Activated CD4-positive, alpha-beta memory T cell treated with anti-CD3 and anti-CD28 coated beads for 36 hours (primary cell): ENCODE measurements at regions of chr1 and their contacts with region 1.

Region 1: DNA sequence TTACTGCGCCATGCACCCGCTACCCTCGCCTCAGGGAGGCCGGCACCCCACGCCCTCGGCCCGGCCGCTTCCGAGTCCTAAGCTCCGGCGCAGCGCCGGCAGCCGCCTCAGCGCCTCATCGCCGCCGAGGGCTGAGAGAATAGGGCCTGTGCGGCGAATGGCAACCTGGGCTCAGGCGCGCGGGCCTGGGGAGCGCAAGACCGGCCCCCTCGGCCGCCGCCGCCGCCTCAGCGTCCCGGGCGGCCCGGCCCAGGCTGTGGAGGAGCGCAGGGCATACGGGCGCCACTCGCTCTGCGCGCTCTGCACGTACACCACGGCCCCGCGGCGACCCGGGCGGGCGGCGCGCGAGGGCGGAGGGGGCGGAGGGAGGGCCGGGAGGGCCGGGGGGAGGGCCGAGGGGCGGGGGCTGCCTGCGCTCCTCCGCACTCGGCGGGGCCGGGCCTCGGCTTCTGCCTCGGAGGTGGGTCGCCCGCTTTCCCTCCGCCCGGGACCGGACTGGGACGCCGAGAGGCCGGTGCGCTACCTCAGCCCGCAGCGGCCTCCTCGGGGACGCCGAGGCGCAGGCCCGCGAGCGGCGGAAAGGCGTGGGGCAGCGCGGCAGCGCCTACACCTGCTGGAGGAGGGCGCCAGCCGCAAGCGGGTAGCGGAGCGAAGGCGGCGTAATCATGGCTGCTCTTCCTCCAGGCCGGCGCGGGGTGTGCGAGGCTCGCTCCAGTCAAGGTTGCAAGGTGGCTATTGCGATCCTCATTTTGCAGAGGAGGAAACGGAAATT is at the start of gene EGLN1:
- DNase-seq: peak; percentile 87
- H3K4me3 Mint-ChIP-seq: peak within 1 kb of the TSS; percentile 84
- H3K27ac Mint-ChIP-seq: peak within 1 kb of the TSS; percentile 81
- H3K4me1 Mint-ChIP-seq: peaks cover 33% of the 10 kb centered on the region
- H3K27me3 Mint-ChIP-seq: no peaks in the 10 kb centered on the region
- total RNA-seq, gene EGLN1: 15.8 to 16.2 TPM

Region 2: DNA sequence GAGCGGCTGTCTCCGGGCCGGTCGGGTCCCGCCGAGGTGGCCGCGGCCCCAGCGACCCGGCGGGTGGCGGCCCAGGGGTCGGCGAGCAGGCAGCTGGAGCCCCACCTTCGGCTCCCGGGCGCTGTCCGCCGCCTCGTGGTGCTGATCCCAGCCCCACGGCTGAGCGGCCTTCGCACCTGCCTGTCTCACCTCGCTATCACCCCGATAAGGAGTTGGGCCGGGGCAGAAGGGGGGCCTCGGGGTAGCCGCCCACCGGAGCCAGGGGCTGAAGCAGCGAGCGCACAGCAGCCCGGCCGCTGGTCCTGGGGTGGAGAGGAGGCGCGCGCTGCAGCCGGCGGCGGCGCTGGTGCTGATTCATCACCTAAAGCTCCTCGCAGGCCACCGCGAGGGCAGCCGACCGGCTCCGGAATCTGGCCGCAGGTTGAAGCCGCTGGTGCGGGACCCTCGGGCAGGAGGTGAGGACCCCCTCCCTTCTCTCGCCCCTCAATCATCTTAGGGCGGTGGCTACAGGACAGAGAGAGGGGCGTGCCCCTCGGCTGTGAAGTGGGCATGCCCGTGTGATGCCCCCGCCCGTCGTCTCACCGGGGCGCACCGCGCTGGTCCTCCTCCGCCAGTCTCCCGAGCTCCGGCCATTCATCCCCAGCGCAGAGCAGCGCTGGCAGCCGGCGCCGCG is 259.7 kb before region 1 on chr1:
- CTCF ChIA-PET with region 1: no interaction called
- POLR2A ChIA-PET with region 1: no interaction called
- intact Hi-C with region 1: no loop called
- DNase-seq: peak; percentile 43
- H3K4me3 Mint-ChIP-seq: no peak overlapping the region
- H3K27ac Mint-ChIP-seq: no peak overlapping the region
- H3K4me1 Mint-ChIP-seq: peaks cover 7% of the 10 kb centered on the region
- H3K27me3 Mint-ChIP-seq: peaks cover 57% of the 10 kb centered on the region

Region 3: GRCh38 chr1:231240883-231241735 is 181.1 kb before region 1 on chr1 and contains the start of gene GNPAT:
- CTCF ChIA-PET with region 1: no interaction called
- POLR2A ChIA-PET with region 1: no interaction called
- intact Hi-C with region 1: loop called (anchors 5 kb)
- DNase-seq: peak; percentile 93
- H3K4me3 Mint-ChIP-seq: peak within 1 kb of the TSS; percentile 97
- H3K27ac Mint-ChIP-seq: peak within 1 kb of the TSS; percentile 92
- H3K4me1 Mint-ChIP-seq: peaks cover 54% of the 10 kb centered on the region
- H3K27me3 Mint-ChIP-seq: no peaks in the 10 kb centered on the region
- total RNA-seq, gene GNPAT: 56.2 to 60.3 TPM

Region 4: GRCh38 chr1:231322880-231323530 is 99.2 kb before region 1 on chr1:
- CTCF ChIA-PET with region 1: no interaction called
- POLR2A ChIA-PET with region 1: no interaction called
- intact Hi-C with region 1: no loop called
- DNase-seq: no peak
- H3K4me3 Mint-ChIP-seq: no peak overlapping the region
- H3K27ac Mint-ChIP-seq: no peak overlapping the region
- H3K4me1 Mint-ChIP-seq: no peaks in the 10 kb centered on the region
- H3K27me3 Mint-ChIP-seq: no peaks in the 10 kb centered on the region

Region 5: DNA sequence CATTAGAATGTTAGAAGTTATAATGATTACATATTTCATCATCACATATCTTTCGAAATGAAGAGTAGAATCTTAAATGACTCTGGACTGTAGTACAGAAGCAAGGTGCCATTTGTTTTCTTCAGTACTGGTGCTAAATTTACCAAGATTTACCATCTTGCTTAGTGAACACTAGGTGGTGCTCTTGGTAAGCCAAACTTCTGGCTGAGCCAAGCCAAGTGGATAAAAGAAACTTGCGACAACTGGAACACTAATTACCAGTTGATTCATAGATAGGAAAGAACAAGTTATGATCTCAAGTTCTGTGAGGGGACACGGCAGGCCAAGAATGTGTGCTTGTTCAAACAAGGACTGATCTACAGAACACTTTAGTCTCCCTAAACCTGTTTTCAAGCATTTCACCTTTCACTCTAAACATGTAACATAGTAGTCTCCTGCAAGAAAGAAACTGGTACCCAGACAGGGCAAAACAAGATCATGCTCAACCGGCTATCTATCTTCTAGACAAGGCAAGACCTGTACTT is 64.3 kb before region 1 on chr1:
- CTCF ChIA-PET with region 1: interaction called, 6 read pairs
- POLR2A ChIA-PET with region 1: no interaction called
- intact Hi-C with region 1: loop called (anchors 1 kb)
- DNase-seq: peak; percentile 40
- H3K4me3 Mint-ChIP-seq: no peak overlapping the region
- H3K27ac Mint-ChIP-seq: peak overlapping the region; percentile 25
- H3K4me1 Mint-ChIP-seq: peaks cover 4% of the 10 kb centered on the region
- H3K27me3 Mint-ChIP-seq: no peaks in the 10 kb centered on the region

Region 6: DNA sequence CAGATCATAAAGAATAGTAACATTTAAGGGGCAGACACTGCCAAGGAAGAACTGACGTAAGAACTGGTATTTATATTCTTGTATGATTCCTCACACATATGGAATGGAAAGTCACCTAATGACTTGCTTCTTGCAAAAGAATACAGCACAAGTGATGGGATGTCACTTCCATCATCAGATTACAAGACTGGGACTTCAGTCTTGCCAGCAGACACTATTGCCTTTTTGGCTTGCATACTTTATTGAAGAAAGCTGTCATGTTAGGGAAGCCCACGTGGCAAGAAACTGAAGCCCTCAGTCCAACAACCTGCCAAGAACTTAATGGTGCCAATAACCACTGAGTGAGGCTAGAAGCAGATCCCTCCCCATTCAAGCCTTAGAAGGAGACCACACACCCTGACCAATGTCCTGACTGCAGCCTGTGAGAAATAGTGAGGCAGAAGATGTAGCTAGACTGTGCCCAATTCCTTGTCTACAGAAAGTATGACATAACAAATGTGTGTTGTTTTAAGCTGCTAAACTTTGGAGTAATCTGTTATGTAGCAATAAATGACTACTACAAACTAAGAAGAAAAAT is 12.1 kb before region 1 on chr1:
- CTCF ChIA-PET with region 1: interaction called, 4 read pairs
- POLR2A ChIA-PET with region 1: no interaction called
- intact Hi-C with region 1: loop called (anchors 1 kb)
- DNase-seq: no peak
- H3K4me3 Mint-ChIP-seq: no peak overlapping the region
- H3K27ac Mint-ChIP-seq: no peak overlapping the region
- H3K4me1 Mint-ChIP-seq: peaks cover 38% of the 10 kb centered on the region
- H3K27me3 Mint-ChIP-seq: no peaks in the 10 kb centered on the region

Region 7: GRCh38 chr1:231528172-231529029 is 106.2 kb after region 1 on chr1 and contains the start of gene TSNAX:
- CTCF ChIA-PET with region 1: no interaction called
- POLR2A ChIA-PET with region 1: interaction called, 6 read pairs
- intact Hi-C with region 1: loop called (anchors 1 kb)
- DNase-seq: peak; percentile 92
- H3K4me3 Mint-ChIP-seq: peak within 1 kb of the TSS; percentile 97
- H3K27ac Mint-ChIP-seq: peak within 1 kb of the TSS; percentile 99
- H3K4me1 Mint-ChIP-seq: peaks cover 46% of the 10 kb centered on the region
- H3K27me3 Mint-ChIP-seq: no peaks in the 10 kb centered on the region
- total RNA-seq, gene TSNAX: 36.4 to 36.5 TPM

Region 8: GRCh38 chr1:231603598-231604275 is 181.6 kb after region 1 on chr1:
- CTCF ChIA-PET with region 1: interaction called, 4 read pairs
- POLR2A ChIA-PET with region 1: no interaction called
- intact Hi-C with region 1: loop called (anchors 5 kb)
- DNase-seq: peak; percentile 42
- H3K4me3 Mint-ChIP-seq: peak overlapping the region; percentile 84
- H3K27ac Mint-ChIP-seq: peak overlapping the region; percentile 66
- H3K4me1 Mint-ChIP-seq: peaks cover 5% of the 10 kb centered on the region
- H3K27me3 Mint-ChIP-seq: no peaks in the 10 kb centered on the region